CD14-positive monocyte (primary cell): ENCODE measurements at regions of chr14 and their contacts with region 1.

Region 1: GRCh38 chr14:50532502-50533240 is at the start of gene MAP4K5:
- DNase-seq: peak; percentile 83 to 84 (median 84)
- H3K4me3 ChIP-seq: peak within 1 kb of the TSS; percentile 88 to 91 (median 89)
- H3K4me3 Mint-ChIP-seq: peak within 1 kb of the TSS; percentile 92 to 96
- H3K27ac ChIP-seq: peak within 1 kb of the TSS; percentile 73 to 84
- H3K27ac Mint-ChIP-seq: peak within 1 kb of the TSS; percentile 88 to 96 (median 95)
- H3K4me1 ChIP-seq: peaks cover 25 to 38% of the 10 kb centered on the region in 2 donors
- H3K4me1 Mint-ChIP-seq: peaks cover 46% of the 10 kb centered on the region
- H3K27me3 ChIP-seq: no peaks in the 10 kb centered on the region
- H3K27me3 Mint-ChIP-seq: peaks cover 0 to 7% (median 0%) of the 10 kb centered on the region in 3 donors
- CTCF ChIP-seq: peak; percentile 95
- polyA plus RNA-seq, gene MAP4K5: 5.0 to 9.1 (median 7.7) TPM

Region 2: GRCh38 chr14:50128225-50128624 is 404.4 kb before region 1 on chr14:
- intact Hi-C with region 1: no loop called
- DNase-seq: no peak
- H3K4me3 ChIP-seq: no peak overlapping the region
- H3K4me3 Mint-ChIP-seq: no peak overlapping the region
- H3K27ac ChIP-seq: no peak overlapping the region
- H3K27ac Mint-ChIP-seq: peak overlapping the region in 2 of 7 donors; percentile 6 to 87
- H3K4me1 ChIP-seq: no peaks in the 10 kb centered on the region
- H3K4me1 Mint-ChIP-seq: no peaks in the 10 kb centered on the region
- H3K27me3 ChIP-seq: no peaks in the 10 kb centered on the region
- H3K27me3 Mint-ChIP-seq: no peaks in the 10 kb centered on the region
- CTCF ChIP-seq: no peak

Region 3: GRCh38 chr14:50231475-50232275 is 301.0 kb before region 1 on chr14 and contains the start of gene SOS2:
- intact Hi-C with region 1: loop called in 1 of 2 experiments (anchors 10 kb)
- DNase-seq: peak; percentile 68 to 69 (median 69)
- H3K4me3 ChIP-seq: peak within 1 kb of the TSS; percentile 76 to 99 (median 88)
- H3K4me3 Mint-ChIP-seq: peak within 1 kb of the TSS; percentile 86 to 97
- H3K27ac ChIP-seq: peak within 1 kb of the TSS; percentile 92 to 99
- H3K27ac Mint-ChIP-seq: peak within 1 kb of the TSS; percentile 90 to 97 (median 96)
- H3K4me1 ChIP-seq: peaks cover 18 to 31% of the 10 kb centered on the region in 2 donors
- H3K4me1 Mint-ChIP-seq: peaks cover 40% of the 10 kb centered on the region
- H3K27me3 ChIP-seq: no peaks in the 10 kb centered on the region
- H3K27me3 Mint-ChIP-seq: peaks cover 0 to 2% (median 0%) of the 10 kb centered on the region in 3 donors
- CTCF ChIP-seq: no peak
- polyA plus RNA-seq, gene SOS2: 9.3 to 24.3 (median 12.0) TPM

Region 4: GRCh38 chr14:50311975-50312733 is 220.5 kb before region 1 on chr14 and contains the starts of genes DMAC2L and L2HGDH:
- intact Hi-C with region 1: loop called in 1 of 2 experiments (anchors 5 kb)
- DNase-seq: peak; percentile 87 to 88 (median 87)
- H3K4me3 ChIP-seq: peak within 1 kb of the TSS; percentile 69 to 91 (median 72)
- H3K4me3 Mint-ChIP-seq: peak within 1 kb of the TSS; percentile 89 to 96
- H3K27ac ChIP-seq: peak within 1 kb of the TSS; percentile 88 to 89
- H3K27ac Mint-ChIP-seq: peak within 1 kb of the TSS; percentile 88 to 98 (median 96)
- H3K4me1 ChIP-seq: peaks cover 18 to 25% of the 10 kb centered on the region in 2 donors
- H3K4me1 Mint-ChIP-seq: peaks cover 21% of the 10 kb centered on the region
- H3K27me3 ChIP-seq: no peaks in the 10 kb centered on the region
- H3K27me3 Mint-ChIP-seq: peaks cover 0 to 3% (median 0%) of the 10 kb centered on the region in 3 donors
- CTCF ChIP-seq: no peak
- polyA plus RNA-seq, gene DMAC2L: 13.4 to 17.3 (median 16.4) TPM
- polyA plus RNA-seq, gene L2HGDH: 0.11 to 0.86 (median 0.48) TPM

Region 5: GRCh38 chr14:50773632-50774541 is 241.2 kb after region 1 on chr14:
- intact Hi-C with region 1: loop called in 1 of 2 experiments (anchors 10 kb)
- DNase-seq: peak in 1 of 3 donors; percentile 10
- H3K4me3 ChIP-seq: no peak overlapping the region
- H3K4me3 Mint-ChIP-seq: no peak overlapping the region
- H3K27ac ChIP-seq: peak overlapping the region in 1 of 2 donors; percentile 6
- H3K27ac Mint-ChIP-seq: peak overlapping the region in 3 of 7 donors; percentile 25 to 66 (median 32)
- H3K4me1 ChIP-seq: no peaks in the 10 kb centered on the region
- H3K4me1 Mint-ChIP-seq: peaks cover 3% of the 10 kb centered on the region
- H3K27me3 ChIP-seq: no peaks in the 10 kb centered on the region
- H3K27me3 Mint-ChIP-seq: no peaks in the 10 kb centered on the region
- CTCF ChIP-seq: peak; percentile 78